ENCODE measurements at regions of chr3 and their contacts with region 1.

Region 1: GRCh38 chr3:24680214-24680967 is 185.7 kb upstream of the THRB start:
- DNase-seq: peak in 19 of 35 experiments; percentile 1 to 29 (median 12)
- ATAC-seq: no peak
- H3K4me3 ChIP-seq: no peak overlapping the region
- H3K4me3 Mint-ChIP-seq: no peak overlapping the region
- H3K27ac ChIP-seq: no peak overlapping the region
- H3K27ac Mint-ChIP-seq: no peak overlapping the region
- H3K4me1 ChIP-seq: no peaks in the 10 kb centered on the region
- H3K4me1 Mint-ChIP-seq: peaks cover 0 to 8% (median 5%) of the 10 kb centered on the region in 3 donors
- H3K27me3 ChIP-seq: peaks cover 0 to 2% of the 10 kb centered on the region in 2 experiments
- H3K27me3 Mint-ChIP-seq: peaks cover 0 to 2% of the 10 kb centered on the region in 2 donors

Region 2: DNA sequence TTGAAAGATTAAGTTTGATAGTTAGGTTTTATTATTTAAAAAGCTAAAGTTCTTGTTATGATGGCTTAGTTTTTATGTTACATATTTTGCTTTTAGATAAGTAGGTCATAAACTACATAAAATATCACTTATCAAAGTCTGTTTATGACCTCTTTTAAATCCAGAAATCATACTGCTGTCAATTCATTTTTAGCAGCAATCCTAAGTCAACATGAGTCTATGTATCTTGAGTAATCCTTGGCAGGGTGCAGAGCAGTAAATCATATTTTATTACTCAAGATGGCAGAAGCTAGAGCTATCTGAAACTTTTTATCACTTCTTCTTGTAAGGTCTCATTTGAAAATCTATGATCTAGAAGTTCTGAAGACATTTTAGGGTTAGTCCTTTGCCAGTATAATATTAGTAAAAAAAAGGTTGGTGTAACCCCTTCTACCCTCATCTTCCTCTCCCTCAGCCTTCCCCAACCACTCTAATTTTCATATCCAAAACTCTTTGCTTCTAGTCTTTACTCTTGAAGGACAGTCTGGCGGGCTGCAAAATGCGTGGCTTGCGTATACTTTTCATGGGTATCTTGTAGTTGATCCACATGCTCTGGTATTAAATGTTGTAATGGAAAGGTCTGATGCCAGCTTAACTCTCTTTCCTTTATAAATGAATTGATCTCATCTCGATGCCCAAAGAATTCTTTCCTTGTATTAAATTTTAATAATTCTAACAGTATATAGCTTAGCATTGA is 51.7 kb before region 1 on chr3:
- CTCF ChIA-PET with region 1: interaction called in 1 of 2 experiments, 10 read pairs
- POLR2A ChIA-PET with region 1: no interaction called
- DNase-seq: no peak
- ATAC-seq: no peak
- H3K4me3 ChIP-seq: no peak overlapping the region
- H3K4me3 Mint-ChIP-seq: no peak overlapping the region
- H3K27ac ChIP-seq: no peak overlapping the region
- H3K27ac Mint-ChIP-seq: no peak overlapping the region
- H3K4me1 ChIP-seq: no peaks in the 10 kb centered on the region
- H3K4me1 Mint-ChIP-seq: no peaks in the 10 kb centered on the region
- H3K27me3 ChIP-seq: no peaks in the 10 kb centered on the region
- H3K27me3 Mint-ChIP-seq: no peaks in the 10 kb centered on the region